ENCODE measurements at regions of chr9 and their contacts with region 1.

Region 1: GRCh38 chr9:128552153-128552743 is at the start of gene SPTAN1:
- DNase-seq: peak; percentile 92 to 97
- ATAC-seq: peak; percentile 86 to 94 (median 87)
- H3K4me3 ChIP-seq: peak within 1 kb of the TSS; percentile 68
- H3K4me3 Mint-ChIP-seq: peak within 1 kb of the TSS; percentile 93
- H3K27ac ChIP-seq: peak within 1 kb of the TSS; percentile 88
- H3K27ac Mint-ChIP-seq: peak within 1 kb of the TSS in 1 of 2 donors; percentile 94
- H3K4me1 ChIP-seq: peaks cover 29% of the 10 kb centered on the region
- H3K4me1 Mint-ChIP-seq: peaks cover 36 to 38% of the 10 kb centered on the region in 2 donors
- H3K27me3 ChIP-seq: no peaks in the 10 kb centered on the region
- H3K27me3 Mint-ChIP-seq: no peaks in the 10 kb centered on the region
- CTCF ChIP-seq: no peak
- total RNA-seq, gene SPTAN1: 301 to 420 (median 400) TPM

Region 2: DNA sequence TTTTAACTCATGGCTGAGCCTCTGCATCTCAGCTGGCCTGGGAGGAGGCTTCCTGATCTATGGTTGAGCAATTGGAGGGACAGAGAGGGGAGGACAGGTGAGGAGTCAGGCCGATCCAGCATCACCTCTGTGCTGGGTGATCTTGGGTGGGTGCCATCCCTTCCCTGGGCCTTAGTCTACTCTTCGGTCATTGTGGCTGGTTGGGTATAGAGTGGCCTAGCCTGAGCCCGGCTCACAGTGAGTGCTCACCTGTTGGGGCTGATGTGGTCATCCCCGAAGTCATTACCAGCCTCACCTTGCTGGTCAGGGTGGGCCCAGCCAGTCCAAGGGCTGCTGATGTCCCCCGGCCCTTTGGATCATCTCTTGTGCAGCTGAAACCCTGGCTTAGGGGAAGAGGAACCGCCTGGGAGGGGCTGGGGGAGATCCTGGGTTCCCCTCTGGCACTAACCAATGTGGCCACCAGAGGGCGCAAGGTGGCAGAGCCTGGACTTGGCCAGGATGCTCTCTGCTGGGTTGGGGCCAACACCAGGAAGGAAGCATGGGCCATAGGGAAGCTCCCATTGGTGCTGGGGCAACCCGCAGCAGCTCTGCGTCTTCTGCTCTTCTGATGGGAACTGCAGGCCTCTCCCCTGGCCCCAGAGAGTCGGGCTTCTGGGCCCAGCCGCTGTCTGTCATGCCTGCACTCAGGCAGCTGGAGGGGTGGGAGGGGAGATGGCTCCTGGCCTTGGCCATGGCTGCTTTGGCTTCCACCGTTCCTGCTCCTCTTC is 113.7 kb before region 1 on chr9:
- intact Hi-C with region 1: loop called (anchors 2 kb)
- DNase-seq: peak; percentile 80 to 88
- ATAC-seq: peak; percentile 86 to 97 (median 96)
- H3K4me3 ChIP-seq: no peak overlapping the region
- H3K4me3 Mint-ChIP-seq: no peak overlapping the region
- H3K27ac ChIP-seq: peak overlapping the region; percentile 6
- H3K27ac Mint-ChIP-seq: peak overlapping the region in 1 of 2 donors; percentile 54
- H3K4me1 ChIP-seq: peaks cover 12% of the 10 kb centered on the region
- H3K4me1 Mint-ChIP-seq: peaks cover 5 to 11% of the 10 kb centered on the region in 2 donors
- H3K27me3 ChIP-seq: no peaks in the 10 kb centered on the region
- H3K27me3 Mint-ChIP-seq: no peaks in the 10 kb centered on the region
- CTCF ChIP-seq: peak; percentile 94

Region 3: GRCh38 chr9:128455849-128456612 is 96.2 kb before region 1 on chr9 and contains the start of gene ODF2:
- intact Hi-C with region 1: loop called (anchors 1 kb)
- DNase-seq: peak; percentile 98 to 99
- ATAC-seq: peak; percentile 86 to 96 (median 88)
- H3K4me3 ChIP-seq: peak within 1 kb of the TSS; percentile 73
- H3K4me3 Mint-ChIP-seq: peak within 1 kb of the TSS; percentile 98
- H3K27ac ChIP-seq: peak within 1 kb of the TSS; percentile 85
- H3K27ac Mint-ChIP-seq: peak within 1 kb of the TSS; percentile 90 to 92
- H3K4me1 ChIP-seq: peaks cover 13% of the 10 kb centered on the region
- H3K4me1 Mint-ChIP-seq: peaks cover 6 to 24% of the 10 kb centered on the region in 2 donors
- H3K27me3 ChIP-seq: no peaks in the 10 kb centered on the region
- H3K27me3 Mint-ChIP-seq: no peaks in the 10 kb centered on the region
- CTCF ChIP-seq: no peak
- total RNA-seq, gene ODF2: 36.4 to 44.4 (median 37.5) TPM

Region 4: DNA sequence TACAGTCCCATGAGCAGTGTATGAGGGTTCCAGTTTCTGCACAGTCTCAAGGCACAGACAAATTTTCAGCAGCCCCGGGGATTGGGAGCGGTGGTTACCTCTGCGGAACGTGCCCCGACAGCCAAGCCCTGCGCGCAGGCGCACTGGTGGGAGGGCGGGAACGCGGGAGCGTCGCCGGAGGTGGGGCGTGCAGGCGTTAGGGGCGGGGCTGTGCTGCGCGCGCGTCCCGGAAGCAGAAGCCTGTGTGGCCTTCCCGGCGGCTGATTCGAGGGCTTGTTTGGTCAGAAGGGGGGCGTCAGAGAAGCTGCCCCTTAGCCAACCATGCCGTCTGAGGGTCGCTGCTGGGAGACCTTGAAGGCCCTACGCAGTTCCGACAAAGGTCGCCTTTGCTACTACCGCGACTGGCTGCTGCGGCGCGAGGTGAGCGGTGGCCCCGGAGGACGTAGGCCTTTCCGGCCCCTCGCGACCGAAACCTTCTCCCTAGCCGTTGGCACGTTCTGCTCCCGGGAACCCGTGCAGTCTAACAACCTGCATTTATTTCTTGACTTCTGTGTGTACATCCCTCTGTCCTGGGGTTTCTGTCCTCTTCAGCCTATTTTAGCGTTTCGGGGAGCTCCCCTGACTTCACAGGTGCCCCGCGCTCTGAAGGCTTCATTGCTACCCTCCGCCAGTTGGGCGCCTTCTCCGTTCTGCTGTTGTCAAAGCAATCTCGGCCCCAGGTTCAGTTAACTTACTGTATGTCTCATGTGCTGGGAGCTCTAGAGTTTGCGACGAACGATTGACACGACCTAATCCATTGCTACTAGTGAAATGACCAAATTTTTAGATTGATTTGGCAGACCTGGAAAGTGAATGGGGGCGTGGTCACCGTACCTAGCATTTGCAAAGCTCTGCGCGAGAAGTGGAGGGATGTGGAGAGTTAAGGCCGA is 47.5 kb before region 1 on chr9 and contains the start of gene GLE1:
- intact Hi-C with region 1: loop called (anchors 2 kb)
- DNase-seq: peak; percentile 98 to 99
- ATAC-seq: peak; percentile 97 to 98 (median 97)
- H3K4me3 ChIP-seq: peak within 1 kb of the TSS; percentile 81
- H3K4me3 Mint-ChIP-seq: peak within 1 kb of the TSS; percentile 98
- H3K27ac ChIP-seq: peak within 1 kb of the TSS; percentile 79
- H3K27ac Mint-ChIP-seq: peak within 1 kb of the TSS; percentile 95
- H3K4me1 ChIP-seq: peaks cover 16% of the 10 kb centered on the region
- H3K4me1 Mint-ChIP-seq: peaks cover 29 to 40% of the 10 kb centered on the region in 2 donors
- H3K27me3 ChIP-seq: no peaks in the 10 kb centered on the region
- H3K27me3 Mint-ChIP-seq: no peaks in the 10 kb centered on the region
- CTCF ChIP-seq: no peak
- total RNA-seq, gene GLE1: 21.2 to 33.3 (median 23.3) TPM

Region 5: GRCh38 chr9:128512820-128513219 is 39.4 kb before region 1 on chr9:
- intact Hi-C with region 1: loop called (anchors 1 kb)
- DNase-seq: no peak
- ATAC-seq: no peak
- H3K4me3 ChIP-seq: no peak overlapping the region
- H3K4me3 Mint-ChIP-seq: no peak overlapping the region
- H3K27ac ChIP-seq: peak overlapping the region; percentile 11
- H3K27ac Mint-ChIP-seq: peak overlapping the region; percentile 70 to 76
- H3K4me1 ChIP-seq: peaks cover 25% of the 10 kb centered on the region
- H3K4me1 Mint-ChIP-seq: peaks cover 22 to 30% of the 10 kb centered on the region in 2 donors
- H3K27me3 ChIP-seq: no peaks in the 10 kb centered on the region
- H3K27me3 Mint-ChIP-seq: no peaks in the 10 kb centered on the region
- CTCF ChIP-seq: no peak

Measured in natural killer cell (primary cell).